ENCODE measurements at regions of chr13 and their contacts with region 1.

Region 1: GRCh38 chr13:46052319-46053161 is at the start of gene ZC3H13:
- DNase-seq: peak; percentile 76
- ATAC-seq: peak; percentile 99
- H3K4me3 Mint-ChIP-seq: peak within 1 kb of the TSS; percentile 95
- H3K27ac Mint-ChIP-seq: peak within 1 kb of the TSS; percentile 96
- H3K4me1 Mint-ChIP-seq: peaks cover 39% of the 10 kb centered on the region
- H3K27me3 Mint-ChIP-seq: peaks cover 1% of the 10 kb centered on the region
- CTCF ChIP-seq: no peak
- total RNA-seq, gene ZC3H13: 48.1 and 48.7 TPM in 2 replicates

Region 2: GRCh38 chr13:45119991-45120864 is 932.3 kb before region 1 on chr13 and contains the start of gene GTF2F2:
- CTCF ChIA-PET with region 1: no interaction called
- POLR2A ChIA-PET with region 1: no interaction called
- intact Hi-C with region 1: loop called (anchors 5 kb)
- DNase-seq: peak; percentile 90
- ATAC-seq: peak; percentile 82
- H3K4me3 Mint-ChIP-seq: no peak within 1 kb of the TSS
- H3K27ac Mint-ChIP-seq: no peak within 1 kb of the TSS
- H3K4me1 Mint-ChIP-seq: peaks cover 9% of the 10 kb centered on the region
- H3K27me3 Mint-ChIP-seq: no peaks in the 10 kb centered on the region
- CTCF ChIP-seq: no peak
- total RNA-seq, gene GTF2F2: 19.4 and 19.8 TPM in 2 replicates

Region 3: DNA sequence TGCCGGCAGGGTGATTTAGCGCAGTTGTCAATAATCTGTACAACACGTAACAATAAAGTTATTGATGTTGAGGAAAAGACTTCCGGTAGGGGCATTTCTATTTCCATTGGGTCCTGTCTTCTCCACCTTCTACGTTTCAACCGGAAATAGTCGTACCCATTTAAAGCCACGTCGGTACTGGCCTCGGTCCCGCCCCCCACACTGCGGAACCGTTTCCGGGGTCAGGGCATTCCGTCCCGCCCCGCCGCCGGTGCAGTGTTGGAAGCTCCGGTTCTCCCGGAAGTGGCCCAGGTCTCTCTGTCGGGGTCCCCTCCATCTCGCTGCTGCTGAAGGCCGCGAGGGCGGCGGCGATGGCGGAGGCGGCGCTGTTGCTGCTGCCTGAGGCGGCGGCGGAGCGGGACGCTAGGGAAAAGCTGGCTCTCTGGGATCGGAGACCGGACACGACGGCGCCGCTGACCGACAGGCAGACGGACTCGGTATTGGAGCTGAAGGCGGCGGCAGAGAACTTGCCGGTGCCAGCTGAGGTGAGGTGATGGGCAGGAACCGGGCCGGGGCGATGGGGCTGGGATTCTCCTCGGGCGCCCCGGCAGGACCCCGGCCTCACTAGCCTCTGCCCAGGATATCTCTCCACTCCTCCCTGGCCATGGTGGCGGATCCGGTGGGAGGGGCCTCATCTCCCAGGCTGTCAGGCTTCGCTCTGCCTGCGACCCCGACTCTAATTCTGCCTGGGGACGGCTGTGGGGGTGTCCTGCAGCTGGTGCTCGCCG is 587.7 kb before region 1 on chr13 and contains the start of gene COG3:
- CTCF ChIA-PET with region 1: no interaction called
- POLR2A ChIA-PET with region 1: no interaction called
- intact Hi-C with region 1: loop called (anchors 1 kb)
- DNase-seq: peak; percentile 90
- ATAC-seq: peak; percentile 97
- H3K4me3 Mint-ChIP-seq: peak within 1 kb of the TSS; percentile 95
- H3K27ac Mint-ChIP-seq: peak within 1 kb of the TSS; percentile 90
- H3K4me1 Mint-ChIP-seq: peaks cover 41% of the 10 kb centered on the region
- H3K27me3 Mint-ChIP-seq: peaks cover 1% of the 10 kb centered on the region
- CTCF ChIP-seq: no peak
- total RNA-seq, gene COG3: 26.0 and 31.6 TPM in 2 replicates

Region 4: DNA sequence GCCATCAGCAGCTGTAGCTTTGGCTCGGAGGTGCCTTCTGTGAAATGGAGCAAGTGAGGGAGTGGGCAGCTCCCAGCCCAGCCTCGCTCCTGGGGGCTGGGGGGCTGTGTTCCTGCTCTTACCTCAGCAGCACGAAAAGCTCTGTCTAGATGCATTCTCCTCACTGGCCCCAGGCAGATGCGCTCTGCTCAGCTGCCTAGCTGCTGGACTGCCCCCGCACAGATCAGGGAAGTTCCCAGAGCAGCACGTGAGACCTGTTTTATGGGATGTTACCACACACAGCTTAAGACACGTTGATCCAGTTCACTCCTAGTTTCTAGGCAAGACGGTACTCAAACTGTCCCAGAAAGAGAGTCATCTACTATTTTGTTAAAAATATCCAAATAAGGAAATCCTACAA is 115.8 kb after region 1 on chr13:
- CTCF ChIA-PET with region 1: no interaction called
- POLR2A ChIA-PET with region 1: no interaction called
- intact Hi-C with region 1: loop called (anchors 5 kb)
- DNase-seq: peak; percentile 31
- ATAC-seq: peak; percentile 28
- H3K4me3 Mint-ChIP-seq: peak overlapping the region; percentile 79
- H3K27ac Mint-ChIP-seq: peak overlapping the region; percentile 85
- H3K4me1 Mint-ChIP-seq: peaks cover 98% of the 10 kb centered on the region
- H3K27me3 Mint-ChIP-seq: no peaks in the 10 kb centered on the region
- CTCF ChIP-seq: no peak

Region 5: DNA sequence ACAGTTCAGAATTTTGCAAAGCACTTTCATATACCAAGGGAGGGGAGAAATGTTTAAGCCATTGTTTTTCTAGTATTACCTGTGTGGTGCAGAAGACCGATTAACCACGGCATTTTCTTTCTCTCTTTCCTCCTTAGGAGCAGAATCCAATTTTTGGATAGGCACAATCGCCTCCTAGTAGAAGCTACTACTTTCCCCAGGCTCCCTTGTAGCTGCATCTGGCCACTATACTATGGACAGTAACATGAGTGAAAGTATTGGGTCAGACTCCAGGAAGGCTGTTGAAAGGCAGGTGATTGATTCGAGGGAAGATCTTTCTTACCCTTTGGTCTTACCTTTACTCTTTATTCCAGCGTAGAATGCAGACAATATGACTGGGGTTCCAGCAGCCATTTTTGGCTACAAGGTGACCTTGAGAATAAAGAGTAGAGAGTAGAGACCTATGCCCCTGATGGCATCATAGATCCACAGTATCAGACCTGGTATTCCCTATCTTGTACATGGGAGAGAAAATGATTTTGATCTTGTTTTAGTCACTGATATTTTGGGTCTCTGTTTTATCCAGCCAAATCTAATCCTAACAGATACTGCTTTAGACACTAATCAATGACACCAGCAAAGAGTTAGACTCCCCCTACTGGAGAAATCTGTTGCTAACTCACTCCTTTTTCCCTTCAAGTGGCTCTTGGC is 236.2 kb after region 1 on chr13:
- CTCF ChIA-PET with region 1: no interaction called
- POLR2A ChIA-PET with region 1: no interaction called
- intact Hi-C with region 1: loop called (anchors 1 kb)
- DNase-seq: no peak
- ATAC-seq: peak; percentile 40
- H3K4me3 Mint-ChIP-seq: no peak overlapping the region
- H3K27ac Mint-ChIP-seq: no peak overlapping the region
- H3K4me1 Mint-ChIP-seq: no peaks in the 10 kb centered on the region
- H3K27me3 Mint-ChIP-seq: peaks cover 3% of the 10 kb centered on the region
- CTCF ChIP-seq: no peak